ENCODE measurements at regions of chr4 and their contacts with region 1.

Region 1: GRCh38 chr4:3871181-3871871 is 105.1 kb downstream of the ADRA2C start:
- DNase-seq: no peak
- ATAC-seq: peak in 2 of 8 donors; percentile 11 to 21
- H3K4me3 ChIP-seq: no peak overlapping the region
- H3K27ac ChIP-seq: no peak overlapping the region
- H3K4me1 ChIP-seq: peaks cover 0 to 6% (median 0%) of the 10 kb centered on the region in 9 donors
- H3K27me3 ChIP-seq: peaks cover 0 to 82% (median 70%) of the 10 kb centered on the region in 7 donors
- CTCF ChIP-seq: no peak

Region 2: GRCh38 chr4:3747581-3747904 is 123.8 kb before region 1 on chr4:
- intact Hi-C with region 1: loop called in 1 of 10 experiments (anchors 10 kb)
- DNase-seq: no peak
- ATAC-seq: peak in 1 of 8 donors; percentile 35
- H3K4me3 ChIP-seq: no peak overlapping the region
- H3K27ac ChIP-seq: no peak overlapping the region
- H3K4me1 ChIP-seq: peaks cover 0 to 18% (median 3%) of the 10 kb centered on the region in 9 donors
- H3K27me3 ChIP-seq: peaks cover 18 to 92% (median 60%) of the 10 kb centered on the region in 7 donors
- CTCF ChIP-seq: peak in 7 of 9 donors; percentile 29 to 53 (median 44)

Region 3: DNA sequence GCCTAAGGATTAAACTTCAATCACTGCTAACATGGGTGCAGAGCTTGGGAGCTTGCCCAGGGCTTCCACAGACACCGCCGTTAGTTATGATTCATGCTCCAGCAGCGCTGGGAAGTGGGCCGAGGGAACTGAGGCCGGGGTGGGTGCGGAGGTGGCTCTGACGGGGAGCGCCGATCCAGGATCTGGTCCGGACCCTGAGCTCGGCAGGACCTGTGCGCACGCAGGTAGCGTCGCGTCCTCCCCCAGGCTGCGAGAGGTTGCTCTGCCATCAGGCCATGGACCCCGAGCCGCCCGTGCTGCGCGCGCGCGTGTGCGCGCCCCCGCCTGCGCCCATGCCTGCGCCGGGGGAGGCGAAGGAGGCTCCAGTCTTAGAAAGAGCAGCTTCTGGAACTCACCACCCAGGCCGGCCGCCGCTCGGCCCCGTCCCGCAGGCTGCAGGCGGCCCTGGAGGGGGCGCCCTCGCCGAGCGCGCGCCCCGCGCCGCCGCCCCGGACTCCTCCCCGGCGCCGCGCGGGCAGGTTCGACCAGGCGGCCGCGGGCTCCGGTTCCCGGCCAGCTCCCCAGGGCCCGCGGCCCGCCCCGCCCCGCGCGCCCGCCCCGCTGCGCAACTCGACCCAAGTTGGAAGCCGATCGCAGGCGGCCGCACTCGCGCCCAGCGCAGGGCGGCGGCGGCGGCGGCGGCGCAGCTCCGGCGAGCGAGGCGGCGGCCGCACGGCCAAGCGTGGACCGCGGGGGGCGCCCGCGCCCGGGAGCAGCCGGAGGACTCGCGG is 105.9 kb before region 1 on chr4:
- intact Hi-C with region 1: loop called in 3 of 10 experiments (anchors 5 to 10 kb)
- DNase-seq: peak; percentile 20 to 31
- ATAC-seq: peak; percentile 30 to 68 (median 54)
- H3K4me3 ChIP-seq: peak overlapping the region; percentile 10 to 53 (median 44)
- H3K27ac ChIP-seq: peak overlapping the region in 6 of 10 donors; percentile 15 to 48 (median 36)
- H3K4me1 ChIP-seq: peaks cover 0 to 11% (median 5%) of the 10 kb centered on the region in 9 donors
- H3K27me3 ChIP-seq: peaks cover 0 to 61% (median 48%) of the 10 kb centered on the region in 7 donors
- CTCF ChIP-seq: peak in 6 of 9 donors; percentile 7 to 45 (median 24)

Region 4: DNA sequence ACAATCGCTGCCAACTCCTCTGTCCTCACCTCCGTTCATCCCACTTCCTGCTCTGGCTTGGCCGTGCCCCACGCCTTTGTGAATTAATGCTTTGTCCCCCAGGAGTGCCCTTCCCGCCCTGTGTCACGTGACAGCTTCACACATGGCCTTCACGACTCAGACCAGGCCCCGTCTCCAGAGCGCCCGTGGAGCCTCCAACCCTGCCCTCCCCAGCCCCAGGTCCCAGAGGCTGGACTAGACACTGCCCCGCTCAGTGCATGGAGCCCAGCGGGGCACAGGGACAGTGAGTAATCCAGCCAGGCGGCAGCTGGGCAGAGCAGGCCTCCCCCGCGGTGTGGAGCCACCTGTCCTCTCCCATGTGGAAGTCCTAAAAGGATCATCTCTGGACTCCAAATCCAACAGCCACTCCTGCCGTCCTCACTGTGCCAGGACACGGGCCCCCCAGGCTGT is 97.7 kb before region 1 on chr4:
- intact Hi-C with region 1: loop called in 3 of 10 experiments (anchors 5 to 10 kb)
- DNase-seq: no peak
- ATAC-seq: peak in 1 of 8 donors; percentile 12
- H3K4me3 ChIP-seq: no peak overlapping the region
- H3K27ac ChIP-seq: no peak overlapping the region
- H3K4me1 ChIP-seq: no peaks in the 10 kb centered on the region
- H3K27me3 ChIP-seq: peaks cover 0 to 74% (median 58%) of the 10 kb centered on the region in 7 donors
- CTCF ChIP-seq: no peak

Region 5: DNA sequence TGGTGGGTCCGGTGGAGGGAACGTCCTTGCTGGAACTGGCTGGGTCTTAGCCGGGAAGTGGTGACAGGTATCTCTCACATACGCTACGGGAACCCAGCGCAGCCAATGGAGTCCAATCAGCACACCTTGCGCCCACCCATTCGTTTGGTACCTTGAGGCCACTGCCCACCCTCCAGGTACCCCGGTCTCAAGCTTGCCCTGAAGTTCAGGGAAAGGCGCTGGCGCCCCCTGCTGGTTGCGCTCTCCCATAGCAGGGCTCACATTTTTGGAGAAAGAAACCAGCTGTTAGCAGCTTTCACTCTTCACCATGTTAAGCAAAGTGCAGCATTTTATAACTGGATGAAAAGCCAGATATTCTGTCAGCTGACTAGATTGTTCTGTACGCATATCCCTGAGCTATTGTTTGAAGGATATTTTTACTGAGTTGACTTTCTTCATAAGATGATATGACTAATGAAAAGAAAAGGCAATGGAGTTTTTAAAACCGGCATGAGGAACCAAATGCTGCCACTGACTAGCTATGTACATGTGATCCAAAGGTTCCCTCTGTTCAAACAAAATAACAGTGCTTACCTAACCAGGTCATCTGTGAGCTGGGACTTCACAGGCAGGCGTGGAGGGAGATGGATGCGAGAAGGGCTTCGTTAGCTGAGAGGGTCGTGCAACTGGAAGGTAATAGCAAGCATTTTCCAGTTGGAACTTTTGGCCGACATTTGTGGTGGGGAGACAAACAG is 311.7 kb after region 1 on chr4:
- intact Hi-C with region 1: no loop called
- DNase-seq: no peak
- ATAC-seq: no peak
- H3K4me3 ChIP-seq: no peak overlapping the region
- H3K27ac ChIP-seq: no peak overlapping the region
- H3K4me1 ChIP-seq: no peaks in the 10 kb centered on the region
- H3K27me3 ChIP-seq: peaks cover 0 to 56% (median 25%) of the 10 kb centered on the region in 7 donors
- CTCF ChIP-seq: peak in 7 of 9 donors; percentile 36 to 56 (median 51)